Left ventricle myocardium superior (tissue), 1 donor: ENCODE measurements at regions of chr13 and their contacts with region 1.

Region 1: DNA sequence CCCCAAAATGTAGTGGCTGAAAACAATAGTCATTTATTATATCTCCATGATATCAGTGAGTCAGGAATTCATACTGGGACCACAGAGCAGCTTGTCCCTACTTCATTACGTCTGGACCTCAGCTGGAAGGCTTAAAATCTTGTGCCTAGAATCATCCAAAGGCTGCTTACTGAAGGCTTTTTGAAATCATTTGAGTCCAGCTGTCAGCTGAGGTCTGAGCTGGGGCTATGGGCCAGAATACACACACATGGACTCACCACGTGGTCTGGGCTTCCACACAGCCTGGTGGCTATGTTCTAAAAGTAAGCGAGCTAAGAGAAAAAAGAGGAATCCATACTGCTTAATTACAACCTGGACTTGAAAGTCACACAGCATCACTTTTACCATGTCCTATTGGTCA is 209.2 kb downstream of the KCTD12 start:
- DNase-seq: peak; percentile 71
- ATAC-seq: peak; percentile 97

Region 2: DNA sequence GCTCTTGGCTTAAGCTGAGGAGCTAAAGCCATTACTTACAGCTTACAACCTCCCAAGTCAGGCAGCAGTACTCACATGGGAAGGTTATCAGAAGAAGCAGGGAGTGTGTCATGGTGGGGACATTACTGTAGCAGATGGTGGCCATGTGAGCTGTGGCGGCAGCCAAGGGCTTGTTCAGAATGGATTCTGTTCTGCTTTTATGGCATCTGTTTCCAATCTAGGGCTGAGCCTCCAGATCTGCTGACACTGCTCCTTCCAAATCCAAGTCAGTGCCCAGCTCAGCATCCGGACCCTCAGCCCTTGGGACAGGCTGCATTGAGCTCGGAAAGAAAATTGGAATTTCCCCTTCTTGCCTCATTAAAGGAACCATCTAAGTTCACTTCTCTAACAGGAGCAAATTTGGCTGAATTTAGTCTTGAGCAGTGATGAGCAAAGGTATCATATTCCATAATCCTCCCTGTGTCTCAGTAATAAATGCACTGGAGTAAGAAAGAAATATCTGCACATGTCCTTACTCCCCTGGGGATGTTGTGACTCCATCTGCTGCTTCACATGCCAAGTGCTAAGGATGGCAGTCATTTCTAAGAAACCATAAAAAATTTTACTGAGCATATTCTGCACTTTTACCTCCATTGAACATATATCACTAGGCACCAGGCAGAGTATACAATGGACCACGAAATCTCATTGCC is 135.3 kb after region 1 on chr13:
- intact Hi-C with region 1: loop called (anchors 10 kb)
- DNase-seq: peak; percentile 80
- ATAC-seq: peak; percentile 96